ENCODE measurements at regions of chr10 and their contacts with region 1.

Region 1: DNA sequence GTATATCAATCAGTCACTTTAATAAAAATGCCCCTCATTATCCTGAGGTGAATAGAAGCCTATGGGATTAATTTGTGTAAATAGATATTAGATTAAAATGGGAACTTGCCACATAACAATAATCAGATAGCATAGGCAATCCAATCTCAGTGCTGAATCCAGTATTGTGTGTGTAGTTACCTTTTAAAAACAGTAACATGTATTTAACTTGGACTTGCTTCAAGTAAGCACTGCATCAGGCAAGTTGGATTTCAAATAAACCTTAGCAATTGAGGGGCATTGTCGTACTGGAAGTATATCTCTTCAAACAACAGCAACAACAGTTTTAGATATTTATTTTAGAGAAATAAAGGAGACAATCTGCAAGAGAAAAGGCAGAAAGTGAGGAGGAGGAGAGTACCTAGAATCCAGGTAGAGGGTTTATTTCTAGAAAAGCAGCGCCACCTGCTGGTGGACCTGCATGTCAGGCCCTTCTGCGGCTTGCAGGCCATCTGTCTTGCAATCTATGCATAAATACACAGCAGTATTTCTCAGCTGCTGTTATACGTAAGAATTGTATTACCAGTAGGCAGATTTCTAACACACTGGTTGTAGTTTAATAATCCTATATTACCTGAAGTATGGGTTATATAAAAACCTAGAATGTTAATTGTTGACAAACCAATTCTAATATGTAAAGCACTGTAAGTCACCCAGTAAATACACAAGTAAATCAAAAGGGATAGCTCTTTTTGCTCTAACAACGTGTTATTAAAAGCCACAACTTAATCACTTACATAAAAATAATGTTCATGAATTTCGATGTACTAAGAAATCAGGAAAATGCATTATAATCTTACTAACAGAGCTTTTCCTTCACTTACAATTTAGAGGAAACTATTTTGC is 652.8 kb downstream of the KCNMA1 start:
- DNase-seq: peak; percentile 85
- ATAC-seq: peak; percentile 63
- H3K4me3 Mint-ChIP-seq: no peak overlapping the region
- H3K27ac Mint-ChIP-seq: no peak overlapping the region
- H3K4me1 Mint-ChIP-seq: no peaks in the 10 kb centered on the region
- H3K27me3 Mint-ChIP-seq: no peaks in the 10 kb centered on the region

Region 2: DNA sequence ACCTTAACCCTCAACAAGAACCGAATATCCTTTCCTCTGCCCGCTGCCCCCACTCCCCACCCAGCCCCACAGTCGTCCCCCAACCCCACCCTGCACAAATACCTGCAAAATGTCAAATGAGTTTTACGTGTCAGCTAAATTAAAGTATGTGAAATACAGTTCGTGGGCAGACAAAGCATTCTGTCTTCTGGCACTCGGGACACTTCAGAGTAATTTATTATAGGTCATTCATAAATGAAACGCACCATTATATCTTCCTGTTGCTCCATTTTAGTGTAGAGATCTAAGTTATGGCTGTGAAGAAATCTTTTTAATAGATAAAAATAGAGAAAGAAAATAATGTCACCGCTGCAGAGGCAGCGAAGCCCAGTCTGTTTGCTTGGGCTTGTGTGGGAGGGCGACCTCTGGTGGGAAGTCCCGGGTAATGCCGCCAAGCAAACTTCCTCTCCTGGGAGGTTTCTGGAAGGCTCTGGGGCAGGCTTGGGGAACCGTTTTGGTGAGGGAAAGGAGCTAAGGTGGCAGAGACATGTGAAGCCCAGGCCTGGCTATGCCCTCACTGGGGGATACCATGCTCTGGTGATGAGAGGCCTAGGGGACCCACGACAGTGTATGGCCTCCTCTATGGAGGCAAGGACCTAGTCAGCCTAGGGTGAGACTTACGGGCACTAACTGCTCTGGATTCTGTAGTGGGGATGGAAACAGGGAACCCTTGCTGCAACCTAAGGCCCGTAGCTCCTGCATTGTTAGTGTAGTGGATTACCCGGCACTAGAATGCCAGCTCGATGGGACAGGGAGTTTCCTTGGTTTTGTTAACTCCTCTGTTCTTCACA is 948.5 kb before region 1 on chr10:
- CTCF ChIA-PET with region 1: no interaction called
- POLR2A ChIA-PET with region 1: no interaction called
- intact Hi-C with region 1: loop called in 1 of 2 experiments (anchors 10 kb)
- DNase-seq: peak; percentile 73
- ATAC-seq: peak; percentile 55
- H3K4me3 Mint-ChIP-seq: no peak overlapping the region
- H3K27ac Mint-ChIP-seq: no peak overlapping the region
- H3K4me1 Mint-ChIP-seq: no peaks in the 10 kb centered on the region
- H3K27me3 Mint-ChIP-seq: peaks cover 3% of the 10 kb centered on the region

Region 3: GRCh38 chr10:76547352-76547972 is 437.3 kb before region 1 on chr10:
- CTCF ChIA-PET with region 1: no interaction called
- POLR2A ChIA-PET with region 1: no interaction called
- intact Hi-C with region 1: loop called in 1 of 2 experiments (anchors 5 kb)
- DNase-seq: peak; percentile 80
- ATAC-seq: no peak
- H3K4me3 Mint-ChIP-seq: no peak overlapping the region
- H3K27ac Mint-ChIP-seq: no peak overlapping the region
- H3K4me1 Mint-ChIP-seq: no peaks in the 10 kb centered on the region
- H3K27me3 Mint-ChIP-seq: peaks cover 2% of the 10 kb centered on the region

Region 4: GRCh38 chr10:77156406-77156879 is 171.6 kb after region 1 on chr10:
- CTCF ChIA-PET with region 1: no interaction called
- POLR2A ChIA-PET with region 1: no interaction called
- intact Hi-C with region 1: no loop called
- DNase-seq: no peak
- ATAC-seq: no peak
- H3K4me3 Mint-ChIP-seq: no peak overlapping the region
- H3K27ac Mint-ChIP-seq: no peak overlapping the region
- H3K4me1 Mint-ChIP-seq: no peaks in the 10 kb centered on the region
- H3K27me3 Mint-ChIP-seq: peaks cover 11% of the 10 kb centered on the region

Measured in activated CD4-positive, alpha-beta T cell treated with anti-CD3 and anti-CD28 coated beads for 36 hours (primary cell).